RWPE1 (cell line): ENCODE measurements at regions of chr5 and their contacts with region 1.

Region 1: GRCh38 chr5:51518607-51519006 is 135.4 kb downstream of the ISL1 start:
- DNase-seq: no peak
- H3K27ac ChIP-seq: no peak overlapping the region
- CTCF ChIP-seq: no peak

Region 2: DNA sequence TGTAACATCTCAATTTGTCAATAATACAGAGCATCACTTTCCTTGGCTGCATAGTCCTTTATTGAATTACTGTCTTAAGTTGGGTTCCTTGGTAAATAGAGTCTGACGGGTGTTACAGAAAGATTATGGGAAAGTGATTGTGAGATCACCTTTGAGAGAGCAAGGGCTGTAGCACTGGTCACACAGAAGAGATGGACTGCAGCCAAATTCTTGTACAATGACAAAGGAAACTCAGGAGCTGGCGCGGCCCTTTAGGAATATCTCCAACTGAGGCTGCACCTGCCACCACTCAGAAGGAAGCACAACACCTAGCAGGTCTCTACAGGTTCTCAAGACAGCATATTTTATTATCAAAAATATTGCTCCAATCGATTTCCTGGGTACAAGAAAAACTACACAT is 485.4 kb before region 1 on chr5:
- CTCF ChIA-PET with region 1: interaction called, 10 read pairs
- POLR2A ChIA-PET with region 1: no interaction called
- DNase-seq: no peak
- H3K27ac ChIP-seq: no peak overlapping the region
- CTCF ChIP-seq: no peak

Region 3: DNA sequence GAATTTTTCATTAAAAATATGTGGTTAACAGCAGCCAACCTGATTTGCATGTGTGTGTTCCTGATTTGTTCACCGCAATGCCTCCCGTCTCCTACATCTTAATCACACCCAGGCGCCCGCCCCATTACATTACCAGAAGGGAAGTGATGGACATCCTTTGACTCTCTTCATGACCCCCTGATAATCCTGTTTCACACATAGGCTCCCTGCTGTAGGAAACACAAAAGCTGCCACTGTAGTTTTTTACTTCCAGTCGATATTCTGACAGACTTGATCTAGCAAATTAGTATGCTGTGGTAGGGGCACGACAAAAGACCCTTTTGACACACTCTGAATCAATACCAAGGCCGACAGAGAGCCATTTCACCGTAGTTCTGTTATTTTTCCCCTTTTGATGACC is 423.1 kb before region 1 on chr5:
- CTCF ChIA-PET with region 1: no interaction called
- POLR2A ChIA-PET with region 1: no interaction called
- DNase-seq: no peak
- H3K27ac ChIP-seq: no peak overlapping the region
- CTCF ChIP-seq: no peak

Region 4: GRCh38 chr5:51382763-51383490 is 135.7 kb before region 1 on chr5 and contains the start of gene ISL1:
- CTCF ChIA-PET with region 1: no interaction called
- POLR2A ChIA-PET with region 1: no interaction called
- DNase-seq: peak; percentile 97
- H3K27ac ChIP-seq: peak within 1 kb of the TSS; percentile 92
- CTCF ChIP-seq: no peak; the same call in 1 of the 2 replicates

Region 5: GRCh38 chr5:51495672-51496071 is 22.9 kb before region 1 on chr5:
- CTCF ChIA-PET with region 1: no interaction called
- POLR2A ChIA-PET with region 1: no interaction called
- DNase-seq: peak; percentile 80
- H3K27ac ChIP-seq: no peak overlapping the region
- CTCF ChIP-seq: no peak

Region 6: GRCh38 chr5:51712201-51712600 is 193.6 kb after region 1 on chr5:
- CTCF ChIA-PET with region 1: no interaction called
- POLR2A ChIA-PET with region 1: no interaction called
- DNase-seq: no peak
- H3K27ac ChIP-seq: no peak overlapping the region
- CTCF ChIP-seq: no peak